Esophagus muscularis mucosa (tissue), 4 donors: ENCODE measurements at regions of chrX and their contacts with region 1.

Region 1: DNA sequence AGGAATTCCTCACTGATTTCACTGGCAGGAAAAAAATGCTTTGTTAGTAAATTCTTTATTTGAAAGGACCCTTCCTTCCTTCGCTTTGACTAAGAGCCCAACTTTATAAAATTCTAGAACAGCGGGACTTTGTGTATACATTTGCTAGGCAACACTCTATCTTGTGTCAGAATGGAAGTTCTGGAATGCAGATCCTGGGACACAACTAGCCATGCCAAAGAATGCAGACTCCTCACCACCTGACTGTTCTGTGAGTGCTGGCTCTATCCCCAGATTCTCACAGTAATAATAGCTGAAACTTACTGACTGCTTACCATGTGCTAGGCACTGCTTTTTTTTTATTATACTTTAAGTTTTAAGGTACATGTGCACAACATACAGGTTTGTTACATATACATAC is 73.3 kb upstream of the ZDHHC15 start:
- DNase-seq: no peak
- H3K4me3 ChIP-seq: peak overlapping the region; percentile 18 to 42 (median 29)
- H3K27ac ChIP-seq: peak overlapping the region; percentile 49 to 58 (median 53)
- H3K4me1 ChIP-seq: peaks cover 0 to 6% (median 0%) of the 10 kb centered on the region in 4 donors
- H3K27me3 ChIP-seq: no peaks in the 10 kb centered on the region
- CTCF ChIP-seq: no peak
- EP300 ChIP-seq: no peak
- POLR2A ChIP-seq: no peak

Region 2: GRCh38 chrX:75522565-75523431 is 73.4 kb before region 1 on chrX and contains the start of gene ZDHHC15:
- intact Hi-C with region 1: loop called (anchors 10 kb)
- DNase-seq: peak; percentile 90
- H3K4me3 ChIP-seq: peak within 1 kb of the TSS; percentile 56 to 62 (median 60)
- H3K27ac ChIP-seq: peak within 1 kb of the TSS; percentile 76 to 82 (median 78)
- H3K4me1 ChIP-seq: peaks cover 0 to 34% (median 19%) of the 10 kb centered on the region in 4 donors
- H3K27me3 ChIP-seq: peaks cover 0 to 3% (median 0%) of the 10 kb centered on the region in 4 donors
- CTCF ChIP-seq: no peak
- EP300 ChIP-seq: no peak
- POLR2A ChIP-seq: no peak
- total RNA-seq, gene ZDHHC15: 2.0 to 5.4 (median 3.1) TPM

Region 3: DNA sequence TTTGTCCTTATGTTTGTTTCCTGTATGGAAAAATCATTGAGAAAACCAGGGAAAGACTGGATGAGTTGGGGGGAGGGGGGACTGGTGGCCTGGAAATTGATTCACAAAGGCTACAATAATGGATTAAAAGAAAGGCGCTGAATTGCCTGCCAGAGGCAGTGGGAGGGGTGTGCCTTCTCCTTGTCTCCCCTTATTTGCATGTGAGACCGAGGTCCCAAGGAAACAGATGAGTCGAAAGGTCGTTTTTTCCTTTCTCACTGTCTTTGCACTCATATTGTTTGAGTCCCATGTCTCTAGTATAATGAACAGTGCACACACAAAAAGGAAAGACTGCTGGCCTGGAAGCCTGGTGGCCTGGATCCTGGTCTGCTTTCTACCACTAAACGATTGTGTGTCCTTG is 13.2 kb after region 1 on chrX:
- intact Hi-C with region 1: no loop called
- DNase-seq: no peak
- H3K4me3 ChIP-seq: no peak overlapping the region
- H3K27ac ChIP-seq: no peak overlapping the region
- H3K4me1 ChIP-seq: no peaks in the 10 kb centered on the region
- H3K27me3 ChIP-seq: no peaks in the 10 kb centered on the region
- CTCF ChIP-seq: no peak
- EP300 ChIP-seq: no peak
- POLR2A ChIP-seq: no peak

Region 4: GRCh38 chrX:75784689-75785491 is 188.7 kb after region 1 on chrX and contains the start of gene MAGEE2:
- intact Hi-C with region 1: no loop called
- DNase-seq: no peak
- H3K4me3 ChIP-seq: peak within 1 kb of the TSS; percentile 41 to 48 (median 44)
- H3K27ac ChIP-seq: no peak within 1 kb of the TSS
- H3K4me1 ChIP-seq: no peaks in the 10 kb centered on the region
- H3K27me3 ChIP-seq: no peaks in the 10 kb centered on the region
- CTCF ChIP-seq: no peak
- EP300 ChIP-seq: no peak
- POLR2A ChIP-seq: no peak
- total RNA-seq, gene MAGEE2: not detected